Caco-2 (cell line): ENCODE measurements at regions of chr7 and their contacts with region 1.

Region 1: GRCh38 chr7:92447345-92448204 is at the start of gene GATAD1:
- DNase-seq: peak; percentile 94 to 95
- H3K4me3 ChIP-seq: peak within 1 kb of the TSS; percentile 89
- H3K4me3 Mint-ChIP-seq: peak within 1 kb of the TSS; percentile 82
- H3K27ac Mint-ChIP-seq: peak within 1 kb of the TSS; percentile 86
- H3K4me1 ChIP-seq: peaks cover 16% of the 10 kb centered on the region
- H3K4me1 Mint-ChIP-seq: peaks cover 9% of the 10 kb centered on the region
- H3K27me3 ChIP-seq: no peaks in the 10 kb centered on the region
- H3K27me3 Mint-ChIP-seq: no peaks in the 10 kb centered on the region
- CTCF ChIP-seq: peak in 1 of 2 experiments; percentile 86
- total RNA-seq, gene GATAD1: 36.7 and 38.2 TPM in 2 replicates

Region 2: DNA sequence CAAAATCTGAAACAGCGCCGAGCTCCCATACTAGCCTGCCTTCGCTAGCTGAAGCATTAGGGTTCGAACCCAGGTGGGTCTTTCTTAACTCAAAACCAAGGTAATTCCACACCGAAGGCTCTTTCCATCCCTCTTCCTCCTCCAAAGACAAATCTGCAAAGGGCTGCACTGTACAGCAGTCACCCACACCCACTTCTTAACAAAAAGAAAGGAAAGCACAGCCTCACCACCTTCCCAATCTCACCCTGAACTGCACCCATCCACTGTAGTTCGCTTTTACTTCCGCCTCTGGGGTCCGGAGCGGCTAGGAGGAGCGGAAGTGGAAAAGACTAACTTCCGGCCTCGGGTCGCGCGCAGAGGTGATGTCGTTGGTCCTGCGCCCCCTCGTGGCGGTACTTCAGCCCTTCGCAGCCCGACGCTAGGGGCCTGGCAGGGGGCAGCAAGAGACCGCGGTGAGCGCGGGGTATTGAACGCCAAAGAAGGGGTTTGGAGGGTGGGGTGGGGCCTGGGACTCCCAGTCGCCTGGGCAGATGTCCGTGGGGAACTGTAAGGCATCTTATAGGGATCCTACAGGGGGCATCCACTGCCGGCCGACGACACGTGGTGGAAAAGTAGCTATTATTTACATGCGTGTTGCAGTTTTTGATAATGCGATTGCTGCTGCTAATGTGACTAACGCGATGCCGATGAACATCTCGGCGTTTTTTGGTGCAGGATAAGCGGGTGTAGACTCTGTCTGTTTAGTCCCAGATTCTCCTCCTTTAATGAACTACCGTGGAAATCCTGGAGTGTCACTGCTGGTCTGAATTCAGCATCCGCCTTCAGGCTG is 566.9 kb before region 1 on chr7 and contains the start of gene MTERF1:
- CTCF ChIA-PET with region 1: interaction called, 3 read pairs
- POLR2A ChIA-PET with region 1: no interaction called
- intact Hi-C with region 1: loop called (anchors 5 kb)
- DNase-seq: peak; percentile 94 to 96
- H3K4me3 ChIP-seq: peak within 1 kb of the TSS; percentile 51
- H3K4me3 Mint-ChIP-seq: peak within 1 kb of the TSS; percentile 90
- H3K27ac Mint-ChIP-seq: peak within 1 kb of the TSS; percentile 86
- H3K4me1 ChIP-seq: no peaks in the 10 kb centered on the region
- H3K4me1 Mint-ChIP-seq: no peaks in the 10 kb centered on the region
- H3K27me3 ChIP-seq: no peaks in the 10 kb centered on the region
- H3K27me3 Mint-ChIP-seq: no peaks in the 10 kb centered on the region
- CTCF ChIP-seq: peak; percentile 97 to 100
- total RNA-seq, gene MTERF1: 16.2 and 16.9 TPM in 2 replicates

Region 3: DNA sequence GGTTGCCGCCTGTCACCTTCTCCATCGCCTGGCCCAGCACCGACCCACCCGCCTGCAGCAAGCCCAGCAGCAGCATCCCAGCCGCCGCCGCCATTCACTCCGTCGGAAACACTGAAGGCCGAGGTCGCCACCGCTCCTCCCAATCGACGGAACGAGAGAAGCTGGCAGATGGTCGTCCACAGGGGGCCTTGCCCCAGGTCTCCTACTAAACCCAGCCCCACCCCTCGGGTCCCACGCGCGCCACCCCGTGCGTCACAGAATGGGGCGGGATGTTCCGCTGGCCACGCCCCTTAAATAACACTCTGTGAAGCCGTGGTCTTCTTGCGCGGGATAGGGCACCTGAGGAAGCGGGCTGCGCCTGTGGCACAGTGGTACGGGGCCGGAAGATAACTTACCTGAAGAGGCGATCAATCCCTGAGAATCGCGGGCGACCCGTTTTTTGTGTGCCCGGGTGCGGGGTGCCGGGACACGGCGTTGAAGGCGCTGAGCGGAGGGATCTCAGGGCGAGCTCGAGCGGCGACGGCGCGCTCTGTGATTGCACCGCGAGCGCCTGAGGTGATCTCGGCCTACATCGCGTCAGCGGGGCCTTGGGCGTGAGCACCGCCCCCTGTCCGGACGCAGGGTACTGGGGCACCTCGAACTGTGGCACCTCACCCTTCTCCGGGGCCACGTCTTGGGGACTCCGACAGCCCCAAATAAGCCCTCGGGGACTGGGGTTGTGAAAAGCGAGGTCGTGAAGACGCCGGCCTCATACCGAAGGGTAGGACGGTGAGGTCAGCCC is 313.1 kb before region 1 on chr7 and contains the start of gene CYP51A1:
- CTCF ChIA-PET with region 1: interaction called, 4 read pairs
- POLR2A ChIA-PET with region 1: interaction called, 5 read pairs
- intact Hi-C with region 1: loop called (anchors 1 kb)
- DNase-seq: peak; percentile 93 to 94
- H3K4me3 ChIP-seq: peak within 1 kb of the TSS; percentile 99
- H3K4me3 Mint-ChIP-seq: peak within 1 kb of the TSS; percentile 95
- H3K27ac Mint-ChIP-seq: peak within 1 kb of the TSS; percentile 98
- H3K4me1 ChIP-seq: peaks cover 9% of the 10 kb centered on the region; the same call in 1 of the 2 replicates
- H3K4me1 Mint-ChIP-seq: peaks cover 18% of the 10 kb centered on the region
- H3K27me3 ChIP-seq: no peaks in the 10 kb centered on the region
- H3K27me3 Mint-ChIP-seq: no peaks in the 10 kb centered on the region
- CTCF ChIP-seq: peak in 1 of 2 experiments; percentile 6
- total RNA-seq, gene CYP51A1: 151 and 153 TPM in 2 replicates

Region 4: GRCh38 chr7:92245487-92246362 is 201.8 kb before region 1 on chr7 and contains the starts of genes ANKIB1 and KRIT1:
- CTCF ChIA-PET with region 1: interaction called, 25 read pairs
- POLR2A ChIA-PET with region 1: interaction called, 24 read pairs
- intact Hi-C with region 1: loop called (anchors 1 kb)
- DNase-seq: peak; percentile 91 to 92
- H3K4me3 ChIP-seq: peak within 1 kb of the TSS; percentile 94
- H3K4me3 Mint-ChIP-seq: peak within 1 kb of the TSS; percentile 98
- H3K27ac Mint-ChIP-seq: peak within 1 kb of the TSS; percentile 99
- H3K4me1 ChIP-seq: peaks cover 16% of the 10 kb centered on the region
- H3K4me1 Mint-ChIP-seq: peaks cover 13% of the 10 kb centered on the region
- H3K27me3 ChIP-seq: no peaks in the 10 kb centered on the region
- H3K27me3 Mint-ChIP-seq: no peaks in the 10 kb centered on the region
- CTCF ChIP-seq: peak; percentile 1 to 31
- total RNA-seq, gene ANKIB1: 56.6 and 57.2 TPM in 2 replicates
- total RNA-seq, gene KRIT1: 50.3 and 54.4 TPM in 2 replicates

Region 5: GRCh38 chr7:92432355-92432870 is 15.2 kb before region 1 on chr7:
- CTCF ChIA-PET with region 1: interaction called, 3 read pairs
- POLR2A ChIA-PET with region 1: interaction called, 11 read pairs
- intact Hi-C with region 1: no loop called
- DNase-seq: peak; percentile 30 to 49
- H3K4me3 ChIP-seq: no peak overlapping the region
- H3K4me3 Mint-ChIP-seq: no peak overlapping the region
- H3K27ac Mint-ChIP-seq: no peak overlapping the region
- H3K4me1 ChIP-seq: no peaks in the 10 kb centered on the region
- H3K4me1 Mint-ChIP-seq: no peaks in the 10 kb centered on the region
- H3K27me3 ChIP-seq: no peaks in the 10 kb centered on the region
- H3K27me3 Mint-ChIP-seq: no peaks in the 10 kb centered on the region
- CTCF ChIP-seq: no peak

Region 6: GRCh38 chr7:92528188-92528957 is 80.8 kb after region 1 on chr7 and contains the starts of genes PEX1 and RBM48:
- CTCF ChIA-PET with region 1: interaction called, 13 read pairs
- POLR2A ChIA-PET with region 1: interaction called, 17 read pairs
- intact Hi-C with region 1: no loop called
- DNase-seq: peak; percentile 97 to 99
- H3K4me3 ChIP-seq: peak within 1 kb of the TSS; percentile 97
- H3K4me3 Mint-ChIP-seq: peak within 1 kb of the TSS; percentile 97
- H3K27ac Mint-ChIP-seq: peak within 1 kb of the TSS; percentile 98
- H3K4me1 ChIP-seq: peaks cover 12% of the 10 kb centered on the region
- H3K4me1 Mint-ChIP-seq: peaks cover 6% of the 10 kb centered on the region
- H3K27me3 ChIP-seq: no peaks in the 10 kb centered on the region
- H3K27me3 Mint-ChIP-seq: no peaks in the 10 kb centered on the region
- CTCF ChIP-seq: peak in 1 of 2 experiments; percentile 58
- total RNA-seq, gene PEX1: 19.5 and 20.1 TPM in 2 replicates
- total RNA-seq, gene RBM48: 14.2 and 14.4 TPM in 2 replicates